ENCODE measurements at regions of chr10 and their contacts with region 1.

Region 1: GRCh38 chr10:36872702-36873393 is 252.6 kb upstream of the ANKRD30A start:
- DNase-seq: peak; percentile 63
- H3K4me3 ChIP-seq: no peak overlapping the region
- H3K27ac ChIP-seq: peak overlapping the region; percentile 15
- H3K4me1 ChIP-seq: peaks cover 22% of the 10 kb centered on the region
- CTCF ChIP-seq: no peak

Region 2: DNA sequence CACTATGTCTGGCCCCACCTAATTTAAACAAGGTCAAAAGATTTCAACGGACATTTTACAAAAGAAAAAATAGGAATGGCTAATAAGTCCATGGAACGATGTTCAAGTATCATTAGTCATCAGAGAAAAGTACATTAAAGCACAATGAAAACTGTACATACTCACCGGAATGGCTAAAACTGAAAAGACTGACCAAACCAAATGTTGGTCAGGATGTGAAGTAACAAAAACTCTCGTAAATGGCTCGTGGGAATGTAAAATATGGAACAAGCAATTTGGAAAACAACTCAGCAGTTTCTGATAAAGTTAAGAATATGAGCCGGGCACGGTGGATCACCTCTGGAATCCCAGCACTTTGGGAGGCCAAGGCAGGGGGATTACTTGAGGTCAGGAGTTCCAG is 1992.0 kb before region 1 on chr10:
- CTCF ChIA-PET with region 1: no interaction called
- POLR2A ChIA-PET with region 1: no interaction called
- intact Hi-C with region 1: no loop called
- DNase-seq: no peak
- H3K4me3 ChIP-seq: no peak overlapping the region
- H3K27ac ChIP-seq: no peak overlapping the region
- H3K4me1 ChIP-seq: no peaks in the 10 kb centered on the region
- CTCF ChIP-seq: no peak

Region 3: GRCh38 chr10:36534471-36535002 is 338.3 kb before region 1 on chr10:
- CTCF ChIA-PET with region 1: no interaction called
- POLR2A ChIA-PET with region 1: no interaction called
- intact Hi-C with region 1: loop called (anchors 5 kb)
- DNase-seq: peak; percentile 77
- H3K4me3 ChIP-seq: no peak overlapping the region
- H3K27ac ChIP-seq: no peak overlapping the region
- H3K4me1 ChIP-seq: peaks cover 16% of the 10 kb centered on the region
- CTCF ChIP-seq: no peak

Region 4: DNA sequence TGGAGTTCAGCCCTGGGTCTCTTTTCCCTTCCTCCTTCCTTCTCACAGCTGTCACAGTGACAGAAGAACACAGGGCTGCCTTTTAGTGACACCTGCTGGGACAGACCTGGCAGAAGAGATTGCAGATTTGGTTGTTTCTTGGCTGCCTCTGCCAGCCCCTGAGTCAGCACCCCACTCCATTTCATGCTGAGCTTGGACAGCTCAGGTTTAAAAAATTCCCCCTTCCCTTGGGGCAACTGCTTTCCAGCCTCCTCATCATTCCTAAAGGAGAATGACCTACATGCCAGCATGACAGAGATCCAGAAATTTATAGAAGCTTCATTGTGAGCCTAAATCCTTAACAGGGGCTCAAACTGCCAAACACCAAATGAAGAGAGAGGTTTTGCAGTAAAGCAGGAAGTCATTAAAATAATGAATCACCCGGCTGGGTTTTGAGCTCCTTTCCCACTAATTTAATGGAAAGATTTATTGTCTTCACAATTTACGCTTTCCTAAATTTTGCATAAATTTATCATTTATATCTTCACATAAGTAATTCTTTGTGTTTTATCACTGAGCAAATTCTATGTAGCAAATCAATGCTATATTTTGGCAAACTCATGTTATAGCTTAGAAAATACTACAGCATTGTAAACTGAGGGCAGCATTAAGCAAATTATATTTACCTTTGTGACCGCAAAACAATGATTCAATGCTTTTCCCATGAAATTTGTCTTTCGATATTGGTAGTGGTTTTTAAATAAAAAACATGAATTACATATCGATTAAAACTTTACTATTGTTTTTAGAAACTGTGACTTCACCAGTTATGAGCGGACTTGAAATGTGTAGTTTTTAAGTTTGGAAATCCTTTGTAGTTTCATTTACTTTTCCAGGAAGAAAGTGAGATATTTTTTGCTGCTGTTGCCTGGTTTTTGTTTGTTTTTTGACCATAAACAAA is 147.0 kb before region 1 on chr10:
- CTCF ChIA-PET with region 1: no interaction called
- POLR2A ChIA-PET with region 1: no interaction called
- intact Hi-C with region 1: loop called (anchors 10 kb)
- DNase-seq: peak; percentile 5
- H3K4me3 ChIP-seq: no peak overlapping the region
- H3K27ac ChIP-seq: no peak overlapping the region
- H3K4me1 ChIP-seq: no peaks in the 10 kb centered on the region
- CTCF ChIP-seq: 0 out of 2 replicates have a peak, but pooled peaks have one; percentile 21